Calu3 (cell line): ENCODE measurements at regions of chr3 and their contacts with region 1.

Region 1: DNA sequence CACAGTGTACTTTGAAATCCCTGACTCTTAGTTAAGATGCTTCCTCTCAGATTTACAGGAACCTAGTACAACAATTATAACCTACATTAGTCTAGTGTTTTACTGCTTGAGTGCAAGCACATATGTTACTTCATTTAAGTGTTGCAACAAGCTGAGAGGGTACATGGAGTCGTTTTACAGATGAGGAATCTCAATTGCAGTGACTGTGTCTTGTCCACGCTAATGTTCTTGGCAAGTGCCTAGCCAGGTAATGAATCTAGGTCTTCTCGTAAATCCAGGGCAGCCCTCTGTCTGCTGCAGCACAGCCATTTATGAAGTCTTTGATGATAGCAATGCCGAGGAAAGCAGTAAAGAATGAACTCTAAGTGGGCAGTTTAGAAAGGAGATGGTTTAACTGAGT is 384.4 kb upstream of the ARPP21 start:
- DNase-seq: no peak
- H3K4me3 Mint-ChIP-seq: no peak overlapping the region
- H3K27ac Mint-ChIP-seq: no peak overlapping the region
- H3K4me1 Mint-ChIP-seq: no peaks in the 10 kb centered on the region
- H3K27me3 Mint-ChIP-seq: no peaks in the 10 kb centered on the region
- CTCF ChIP-seq: no peak

Region 2: DNA sequence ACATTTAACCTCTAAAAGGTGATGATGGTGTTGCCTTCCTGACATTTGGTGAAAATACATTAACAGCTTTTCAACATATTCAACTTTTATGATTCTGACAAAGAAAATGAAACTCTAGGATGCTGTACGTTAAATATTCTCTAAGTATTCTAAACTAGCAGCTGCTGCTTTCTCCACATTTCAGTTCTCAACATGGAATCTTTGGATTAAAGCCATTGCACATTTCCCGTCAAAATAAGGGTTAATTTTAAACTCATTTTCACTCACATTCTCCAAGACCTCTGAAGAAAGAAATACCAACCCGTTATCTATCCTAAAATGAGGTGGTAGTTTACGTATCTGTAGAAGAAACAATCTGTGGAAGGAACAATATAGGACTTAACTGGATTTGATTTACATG is 271.3 kb before region 1 on chr3:
- CTCF ChIA-PET with region 1: no interaction called
- intact Hi-C with region 1: no loop called
- DNase-seq: no peak
- H3K4me3 Mint-ChIP-seq: no peak overlapping the region
- H3K27ac Mint-ChIP-seq: no peak overlapping the region
- H3K4me1 Mint-ChIP-seq: no peaks in the 10 kb centered on the region
- H3K27me3 Mint-ChIP-seq: no peaks in the 10 kb centered on the region
- CTCF ChIP-seq: no peak

Region 3: GRCh38 chr3:34998905-34999304 is 256.0 kb before region 1 on chr3:
- CTCF ChIA-PET with region 1: no interaction called
- intact Hi-C with region 1: loop called (anchors 10 kb)
- DNase-seq: no peak
- H3K4me3 Mint-ChIP-seq: no peak overlapping the region
- H3K27ac Mint-ChIP-seq: no peak overlapping the region
- H3K4me1 Mint-ChIP-seq: peaks cover 16% of the 10 kb centered on the region
- H3K27me3 Mint-ChIP-seq: no peaks in the 10 kb centered on the region
- CTCF ChIP-seq: no peak